ENCODE measurements at regions of chr9 and their contacts with region 1.

Region 1: GRCh38 chr9:109584205-109584604 is 86.1 kb upstream of the PTPN3 start:
- DNase-seq: no peak
- CTCF ChIP-seq: no peak

Region 2: GRCh38 chr9:109264877-109265587 is 319.2 kb before region 1 on chr9:
- in situ Hi-C with region 1: no loop called
- DNase-seq: no peak
- CTCF ChIP-seq: no peak

Region 3: DNA sequence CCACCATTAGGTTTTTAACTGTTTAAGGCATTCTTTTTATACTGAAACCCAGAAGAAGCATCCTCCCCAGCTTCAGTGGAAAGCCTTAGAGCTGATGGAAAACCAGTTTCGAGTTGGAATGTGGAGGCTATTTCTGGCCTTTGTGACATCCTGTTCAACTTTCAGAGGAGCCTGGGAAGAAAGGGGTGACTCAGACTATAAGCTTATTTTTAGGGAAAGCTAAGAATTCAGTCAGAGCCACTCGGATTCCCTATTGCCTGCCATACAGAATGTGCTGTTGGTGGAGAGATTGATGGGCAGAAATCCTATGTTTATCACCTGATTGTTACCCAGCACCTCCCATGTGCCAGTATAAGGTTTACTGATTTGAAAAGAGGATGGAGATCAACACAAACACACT is 215.6 kb after region 1 on chr9:
- in situ Hi-C with region 1: loop called (anchors 10 kb)
- DNase-seq: no peak
- CTCF ChIP-seq: no peak

Region 4: GRCh38 chr9:109843641-109844040 is 259.4 kb after region 1 on chr9:
- in situ Hi-C with region 1: no loop called
- DNase-seq: no peak
- CTCF ChIP-seq: no peak

Measured in GM13976 (cell line).